Lower lobe of right lung (tissue), 2 donors: ENCODE measurements at regions of chr19 and their contacts with region 1.

Region 1: GRCh38 chr19:43446746-43447489 is 18.5 kb downstream of the LYPD3 start:
- DNase-seq: peak; percentile 85
- ATAC-seq: peak; percentile 88 to 90
- H3K4me3 ChIP-seq: no peak overlapping the region
- H3K27ac ChIP-seq: no peak overlapping the region
- H3K4me1 ChIP-seq: no peaks in the 10 kb centered on the region
- H3K27me3 ChIP-seq: no peaks in the 10 kb centered on the region
- CTCF ChIP-seq: peak; percentile 97

Region 2: DNA sequence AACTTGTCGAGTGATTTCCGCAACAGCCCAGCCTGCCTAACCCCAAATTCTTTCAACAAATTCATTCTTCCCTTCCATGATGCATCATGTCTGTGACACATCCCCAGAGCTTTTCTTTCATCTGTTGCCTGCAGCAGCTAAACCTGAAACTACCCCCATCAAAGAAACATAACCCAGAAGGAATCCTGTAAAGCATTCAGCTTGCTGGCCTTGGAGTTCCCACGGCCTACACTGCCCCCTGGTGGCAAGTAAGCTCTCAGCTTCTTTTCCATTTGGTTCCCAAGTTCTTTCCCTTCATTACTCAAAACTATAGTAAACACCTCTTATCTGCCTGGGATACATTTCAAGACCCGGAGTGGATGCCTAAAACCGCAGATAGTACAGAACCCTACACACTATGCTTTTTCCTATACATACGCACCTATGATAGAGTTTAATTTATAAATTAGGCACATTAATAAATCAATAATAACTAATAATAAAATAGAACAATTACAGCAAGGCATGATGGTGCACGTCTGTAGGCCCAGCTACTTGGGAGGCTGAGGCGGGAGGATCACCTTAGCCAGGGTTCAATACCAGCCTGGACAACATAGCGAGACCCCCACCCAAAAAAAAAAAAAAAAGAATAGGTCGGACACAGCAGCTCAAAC is 72.6 kb after region 1 on chr19:
- intact Hi-C with region 1: loop called (anchors 5 kb)
- DNase-seq: peak; percentile 77
- ATAC-seq: peak; percentile 84 to 89
- H3K4me3 ChIP-seq: no peak overlapping the region
- H3K27ac ChIP-seq: no peak overlapping the region
- H3K4me1 ChIP-seq: peaks cover 19% of the 10 kb centered on the region
- H3K27me3 ChIP-seq: no peaks in the 10 kb centered on the region
- CTCF ChIP-seq: peak; percentile 93